Activated CD4-positive, alpha-beta T cell treated with anti-CD3 and anti-CD28 coated beads, Interleukin-2, amount 10 ng/mL, durations not matched to agents 24 days and 14 days (primary cell): ENCODE measurements at regions of chr5 and their contacts with region 1.

Region 1: GRCh38 chr5:132466433-132467286 is 23.9 kb downstream of the IRF1 start:
- DNase-seq: peak; percentile 93
- H3K4me3 Mint-ChIP-seq: peak overlapping the region; percentile 64
- H3K27ac Mint-ChIP-seq: peak overlapping the region; percentile 80
- H3K4me1 Mint-ChIP-seq: peaks cover 81% of the 10 kb centered on the region
- H3K27me3 Mint-ChIP-seq: no peaks in the 10 kb centered on the region

Region 2: GRCh38 chr5:132419502-132420468 is 46.9 kb before region 1 on chr5:
- intact Hi-C with region 1: loop called (anchors 1 kb)
- DNase-seq: peak; percentile 90
- H3K4me3 Mint-ChIP-seq: peak overlapping the region; percentile 72
- H3K27ac Mint-ChIP-seq: peak overlapping the region; percentile 87
- H3K4me1 Mint-ChIP-seq: peaks cover 79% of the 10 kb centered on the region
- H3K27me3 Mint-ChIP-seq: no peaks in the 10 kb centered on the region

Region 3: GRCh38 chr5:132476876-132477781 is 10.5 kb after region 1 on chr5:
- intact Hi-C with region 1: no loop called
- DNase-seq: peak; percentile 75
- H3K4me3 Mint-ChIP-seq: no peak overlapping the region
- H3K27ac Mint-ChIP-seq: peak overlapping the region; percentile 73
- H3K4me1 Mint-ChIP-seq: peaks cover 57% of the 10 kb centered on the region
- H3K27me3 Mint-ChIP-seq: no peaks in the 10 kb centered on the region